ENCODE measurements at regions of chr2 and their contacts with region 1.

Region 1: DNA sequence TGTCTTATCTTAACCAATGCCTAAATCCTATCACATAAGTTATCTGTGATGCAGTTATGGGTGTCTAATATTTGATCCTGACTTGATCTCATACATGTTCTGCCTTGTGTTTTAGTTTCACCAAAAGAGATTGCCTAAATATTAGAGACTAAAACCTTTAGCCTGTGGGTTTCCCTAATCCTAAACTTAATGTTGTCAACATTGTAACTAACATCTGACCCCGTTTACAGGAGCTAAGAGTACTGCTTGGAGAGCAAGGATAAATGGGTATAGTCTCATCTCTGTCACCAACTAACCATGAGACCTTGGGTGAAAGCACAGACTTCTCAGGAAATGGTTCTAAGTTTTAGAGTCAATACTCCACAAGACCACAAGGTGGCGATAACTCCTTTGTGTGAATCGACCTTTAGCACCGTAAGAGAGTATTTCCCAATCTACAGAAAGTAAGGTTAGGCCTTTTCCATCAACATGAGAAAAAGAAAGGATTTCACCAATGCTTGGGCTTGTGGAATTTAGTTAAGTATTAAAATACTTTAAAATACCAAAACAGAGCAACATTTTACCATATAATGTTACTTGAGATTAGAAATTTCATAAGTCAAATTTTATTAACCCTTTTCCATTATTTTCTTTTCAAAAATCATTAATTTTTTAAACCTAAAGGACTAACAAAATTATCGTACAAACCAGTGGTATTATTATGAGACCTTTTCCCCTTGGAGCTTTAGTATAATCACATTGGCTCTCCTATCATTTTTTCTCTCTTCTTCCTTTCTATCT is 60.5 kb downstream of the G6PC2 start:
- DNase-seq: peak; percentile 86
- H3K4me3 Mint-ChIP-seq: no peak overlapping the region
- H3K27ac Mint-ChIP-seq: no peak overlapping the region
- H3K4me1 Mint-ChIP-seq: peaks cover 9% of the 10 kb centered on the region
- H3K27me3 Mint-ChIP-seq: no peaks in the 10 kb centered on the region
- CTCF ChIP-seq: peak; percentile 84

Region 2: GRCh38 chr2:168699844-168700417 is 261.7 kb before region 1 on chr2:
- CTCF ChIA-PET with region 1: no interaction called
- POLR2A ChIA-PET with region 1: no interaction called
- intact Hi-C with region 1: no loop called
- DNase-seq: peak; percentile 43
- H3K4me3 Mint-ChIP-seq: no peak overlapping the region
- H3K27ac Mint-ChIP-seq: no peak overlapping the region
- H3K4me1 Mint-ChIP-seq: peaks cover 18% of the 10 kb centered on the region
- H3K27me3 Mint-ChIP-seq: no peaks in the 10 kb centered on the region
- CTCF ChIP-seq: no peak

Region 3: DNA sequence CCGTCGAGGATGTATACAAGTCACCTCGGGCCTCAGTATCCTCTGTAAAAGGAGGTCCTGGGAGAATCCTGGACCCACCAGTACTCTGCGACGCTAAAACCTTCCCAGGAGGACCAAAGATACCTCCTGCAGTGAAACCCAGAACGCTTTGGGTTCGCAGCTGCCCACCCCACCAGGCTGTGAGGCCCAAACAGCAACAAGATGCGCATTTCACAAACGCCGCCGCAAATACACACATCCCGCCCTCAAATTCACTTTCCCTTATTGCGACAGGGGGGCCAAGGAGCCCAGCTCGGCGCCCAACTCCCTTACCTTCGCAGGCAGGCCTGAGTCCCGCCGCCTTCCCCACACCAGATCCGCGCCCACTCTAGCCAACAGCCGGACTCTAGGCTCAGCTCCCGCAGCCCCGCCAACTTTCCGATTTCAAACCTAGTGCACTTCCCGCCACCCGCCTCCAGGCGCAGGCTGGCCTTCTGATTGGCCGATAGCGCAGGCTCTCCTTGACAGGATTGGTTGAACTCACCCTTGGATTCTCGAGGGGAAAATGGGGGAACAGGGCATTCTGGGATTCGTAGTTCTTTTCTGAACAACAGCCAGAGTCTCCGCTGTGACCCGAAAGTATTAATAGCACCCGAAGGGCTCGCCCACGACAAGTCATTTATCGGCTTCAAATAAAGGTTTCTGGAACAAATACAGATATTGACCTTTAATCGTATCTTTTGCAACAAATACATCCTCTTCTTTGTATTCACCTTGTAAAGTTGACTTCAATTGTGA is 71.4 kb before region 1 on chr2 and contains the start of gene SPC25:
- CTCF ChIA-PET with region 1: no interaction called
- POLR2A ChIA-PET with region 1: no interaction called
- intact Hi-C with region 1: no loop called
- DNase-seq: peak; percentile 95
- H3K4me3 Mint-ChIP-seq: peak within 1 kb of the TSS; percentile 89
- H3K27ac Mint-ChIP-seq: peak within 1 kb of the TSS; percentile 52
- H3K4me1 Mint-ChIP-seq: peaks cover 11% of the 10 kb centered on the region
- H3K27me3 Mint-ChIP-seq: peaks cover 34% of the 10 kb centered on the region
- CTCF ChIP-seq: no peak
- total RNA-seq, gene SPC25: 2.5 and 3.5 TPM in 2 replicates

Region 4: GRCh38 chr2:168948621-168949212 is 12.9 kb before region 1 on chr2:
- CTCF ChIA-PET with region 1: interaction called, 21 read pairs
- POLR2A ChIA-PET with region 1: no interaction called
- intact Hi-C with region 1: no loop called
- DNase-seq: peak; percentile 41
- H3K4me3 Mint-ChIP-seq: no peak overlapping the region
- H3K27ac Mint-ChIP-seq: no peak overlapping the region
- H3K4me1 Mint-ChIP-seq: no peaks in the 10 kb centered on the region
- H3K27me3 Mint-ChIP-seq: peaks cover 12% of the 10 kb centered on the region
- CTCF ChIP-seq: peak; percentile 59

Region 5: GRCh38 chr2:169131587-169132512 is 170.2 kb after region 1 on chr2:
- CTCF ChIA-PET with region 1: interaction called, 47 read pairs
- POLR2A ChIA-PET with region 1: interaction called, 3 read pairs
- intact Hi-C with region 1: loop called (anchors 1 kb)
- DNase-seq: peak; percentile 78
- H3K4me3 Mint-ChIP-seq: no peak overlapping the region
- H3K27ac Mint-ChIP-seq: no peak overlapping the region
- H3K4me1 Mint-ChIP-seq: no peaks in the 10 kb centered on the region
- H3K27me3 Mint-ChIP-seq: no peaks in the 10 kb centered on the region
- CTCF ChIP-seq: peak; percentile 73

Region 6: GRCh38 chr2:169141713-169142352 is 180.2 kb after region 1 on chr2:
- CTCF ChIA-PET with region 1: interaction called, 19 read pairs
- POLR2A ChIA-PET with region 1: interaction called, 4 read pairs
- intact Hi-C with region 1: loop called (anchors 1 kb)
- DNase-seq: peak; percentile 83
- H3K4me3 Mint-ChIP-seq: no peak overlapping the region
- H3K27ac Mint-ChIP-seq: no peak overlapping the region
- H3K4me1 Mint-ChIP-seq: peaks cover 6% of the 10 kb centered on the region
- H3K27me3 Mint-ChIP-seq: no peaks in the 10 kb centered on the region
- CTCF ChIP-seq: peak; percentile 76

Region 7: GRCh38 chr2:169221745-169222369 is 260.2 kb after region 1 on chr2:
- CTCF ChIA-PET with region 1: interaction called, 16 read pairs
- POLR2A ChIA-PET with region 1: no interaction called
- intact Hi-C with region 1: loop called (anchors 2 kb)
- DNase-seq: peak; percentile 42
- H3K4me3 Mint-ChIP-seq: no peak overlapping the region
- H3K27ac Mint-ChIP-seq: no peak overlapping the region
- H3K4me1 Mint-ChIP-seq: no peaks in the 10 kb centered on the region
- H3K27me3 Mint-ChIP-seq: no peaks in the 10 kb centered on the region
- CTCF ChIP-seq: peak; percentile 41

Region 8: GRCh38 chr2:169275696-169276444 is 314.2 kb after region 1 on chr2:
- CTCF ChIA-PET with region 1: interaction called, 3 read pairs
- POLR2A ChIA-PET with region 1: interaction called, 3 read pairs
- intact Hi-C with region 1: loop called (anchors 5 kb)
- DNase-seq: peak; percentile 31
- H3K4me3 Mint-ChIP-seq: no peak overlapping the region
- H3K27ac Mint-ChIP-seq: no peak overlapping the region
- H3K4me1 Mint-ChIP-seq: no peaks in the 10 kb centered on the region
- H3K27me3 Mint-ChIP-seq: peaks cover 70% of the 10 kb centered on the region
- CTCF ChIP-seq: peak; percentile 25

Region 9: DNA sequence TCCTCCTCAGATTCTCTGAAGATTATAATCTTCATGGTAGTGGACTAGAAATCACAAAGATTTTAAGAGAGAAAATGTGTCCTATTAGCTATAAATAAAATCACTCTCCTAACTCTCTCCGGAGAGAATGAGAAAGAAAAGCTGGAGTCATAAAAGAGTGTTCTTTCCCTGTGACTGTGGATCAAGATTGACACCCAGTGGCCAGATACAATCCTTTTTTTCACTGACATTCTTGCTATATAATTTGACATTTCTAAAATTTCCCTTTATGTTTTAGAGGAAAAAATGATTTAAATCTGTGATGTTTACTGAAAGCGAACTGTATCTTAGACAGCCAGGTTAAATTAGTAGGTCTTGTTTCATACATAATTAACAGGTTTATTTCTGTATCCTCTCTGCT is 436.1 kb after region 1 on chr2:
- CTCF ChIA-PET with region 1: interaction called, 7 read pairs
- POLR2A ChIA-PET with region 1: interaction called, 4 read pairs
- intact Hi-C with region 1: loop called (anchors 1 kb)
- DNase-seq: peak; percentile 27
- H3K4me3 Mint-ChIP-seq: no peak overlapping the region
- H3K27ac Mint-ChIP-seq: no peak overlapping the region
- H3K4me1 Mint-ChIP-seq: peaks cover 6% of the 10 kb centered on the region
- H3K27me3 Mint-ChIP-seq: peaks cover 38% of the 10 kb centered on the region
- CTCF ChIP-seq: peak; percentile 28

Region 10: DNA sequence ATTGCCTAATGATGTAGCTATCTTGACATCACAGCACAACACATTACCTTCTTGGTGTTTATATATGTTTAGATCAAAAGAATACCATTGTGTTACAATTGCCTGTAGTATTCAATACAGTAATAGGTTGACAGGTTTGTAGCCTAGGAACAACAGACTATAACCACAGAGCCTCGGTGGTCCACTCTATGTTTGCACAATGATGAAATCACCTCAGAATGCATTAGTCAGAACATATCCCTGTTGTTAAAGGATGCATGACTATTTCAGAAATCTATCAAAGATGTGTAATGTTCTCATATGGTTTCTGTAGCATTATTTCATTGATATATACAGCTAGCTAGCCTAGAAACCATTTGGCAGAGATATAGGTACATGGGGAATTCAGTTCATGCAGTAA is 854.2 kb after region 1 on chr2:
- CTCF ChIA-PET with region 1: no interaction called
- POLR2A ChIA-PET with region 1: no interaction called
- intact Hi-C with region 1: no loop called
- DNase-seq: peak; percentile 58
- H3K4me3 Mint-ChIP-seq: no peak overlapping the region
- H3K27ac Mint-ChIP-seq: no peak overlapping the region
- H3K4me1 Mint-ChIP-seq: peaks cover 14% of the 10 kb centered on the region
- H3K27me3 Mint-ChIP-seq: no peaks in the 10 kb centered on the region
- CTCF ChIP-seq: no peak

Region 11: GRCh38 chr2:169839954-169840746 is 878.5 kb after region 1 on chr2:
- CTCF ChIA-PET with region 1: no interaction called
- POLR2A ChIA-PET with region 1: no interaction called
- intact Hi-C with region 1: no loop called
- DNase-seq: no peak
- H3K4me3 Mint-ChIP-seq: no peak overlapping the region
- H3K27ac Mint-ChIP-seq: no peak overlapping the region
- H3K4me1 Mint-ChIP-seq: peaks cover 12% of the 10 kb centered on the region
- H3K27me3 Mint-ChIP-seq: no peaks in the 10 kb centered on the region
- CTCF ChIP-seq: no peak